ENCODE measurements at regions of chr13 and their contacts with region 1.

Region 1: GRCh38 chr13:44435142-44435982 is 61.7 kb downstream of the SERP2 start:
- DNase-seq: peak; percentile 86
- H3K4me3 Mint-ChIP-seq: peak overlapping the region; percentile 71
- H3K27ac Mint-ChIP-seq: peak overlapping the region; percentile 92
- H3K4me1 Mint-ChIP-seq: peaks cover 29% of the 10 kb centered on the region
- H3K27me3 Mint-ChIP-seq: no peaks in the 10 kb centered on the region
- CTCF ChIP-seq: no peak

Region 2: GRCh38 chr13:43905435-43906031 is 529.8 kb before region 1 on chr13:
- CTCF ChIA-PET with region 1: interaction called, 6 read pairs
- intact Hi-C with region 1: loop called (anchors 1 kb)
- DNase-seq: peak; percentile 23
- H3K4me3 Mint-ChIP-seq: no peak overlapping the region
- H3K27ac Mint-ChIP-seq: no peak overlapping the region
- H3K4me1 Mint-ChIP-seq: peaks cover 18% of the 10 kb centered on the region
- H3K27me3 Mint-ChIP-seq: no peaks in the 10 kb centered on the region
- CTCF ChIP-seq: peak; percentile 44

Region 3: DNA sequence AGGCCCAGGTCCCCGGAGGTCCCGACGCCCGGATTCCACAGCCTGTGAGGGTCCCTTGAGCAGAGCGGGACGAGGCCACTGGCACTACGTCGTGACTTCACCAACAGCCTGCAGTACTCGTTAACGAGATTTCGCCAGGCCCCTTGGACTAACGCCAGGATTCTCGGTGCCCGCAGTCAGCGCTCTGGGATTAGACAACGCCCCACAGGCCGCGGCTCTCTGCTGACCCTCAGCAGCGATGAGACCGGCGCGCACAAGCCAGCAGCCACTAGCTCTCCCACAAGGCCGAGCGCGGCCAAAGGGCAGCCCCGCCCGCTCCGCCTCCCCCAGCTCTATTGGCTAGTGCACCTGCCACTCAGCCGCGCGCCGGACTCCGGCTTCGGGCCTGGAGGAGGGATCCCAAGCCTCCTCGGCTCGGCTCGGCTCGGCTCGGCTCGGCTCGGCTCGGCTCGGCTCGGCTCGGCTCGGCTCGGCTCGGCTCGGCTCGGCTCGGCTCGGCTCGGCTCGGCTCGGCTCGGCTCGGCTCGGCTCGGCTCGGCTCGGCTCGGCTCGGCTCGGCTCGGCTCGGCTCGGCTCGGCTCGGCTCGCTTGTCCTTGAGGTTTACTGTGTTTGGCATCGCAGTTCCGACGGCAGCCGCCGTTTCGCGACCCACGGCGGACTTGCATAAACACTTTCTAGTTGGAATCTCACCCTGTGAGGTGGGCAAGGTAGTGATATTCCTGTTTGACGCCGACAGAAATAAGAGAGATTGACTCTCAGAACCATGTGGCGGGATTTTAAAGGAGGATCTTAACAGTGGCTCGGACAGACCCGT is 293.4 kb before region 1 on chr13:
- CTCF ChIA-PET with region 1: interaction called, 5 read pairs
- intact Hi-C with region 1: loop called (anchors 5 kb)
- DNase-seq: peak; percentile 97
- H3K4me3 Mint-ChIP-seq: peak overlapping the region; percentile 75
- H3K27ac Mint-ChIP-seq: peak overlapping the region; percentile 85
- H3K4me1 Mint-ChIP-seq: peaks cover 20% of the 10 kb centered on the region
- H3K27me3 Mint-ChIP-seq: no peaks in the 10 kb centered on the region
- CTCF ChIP-seq: no peak

Region 4: DNA sequence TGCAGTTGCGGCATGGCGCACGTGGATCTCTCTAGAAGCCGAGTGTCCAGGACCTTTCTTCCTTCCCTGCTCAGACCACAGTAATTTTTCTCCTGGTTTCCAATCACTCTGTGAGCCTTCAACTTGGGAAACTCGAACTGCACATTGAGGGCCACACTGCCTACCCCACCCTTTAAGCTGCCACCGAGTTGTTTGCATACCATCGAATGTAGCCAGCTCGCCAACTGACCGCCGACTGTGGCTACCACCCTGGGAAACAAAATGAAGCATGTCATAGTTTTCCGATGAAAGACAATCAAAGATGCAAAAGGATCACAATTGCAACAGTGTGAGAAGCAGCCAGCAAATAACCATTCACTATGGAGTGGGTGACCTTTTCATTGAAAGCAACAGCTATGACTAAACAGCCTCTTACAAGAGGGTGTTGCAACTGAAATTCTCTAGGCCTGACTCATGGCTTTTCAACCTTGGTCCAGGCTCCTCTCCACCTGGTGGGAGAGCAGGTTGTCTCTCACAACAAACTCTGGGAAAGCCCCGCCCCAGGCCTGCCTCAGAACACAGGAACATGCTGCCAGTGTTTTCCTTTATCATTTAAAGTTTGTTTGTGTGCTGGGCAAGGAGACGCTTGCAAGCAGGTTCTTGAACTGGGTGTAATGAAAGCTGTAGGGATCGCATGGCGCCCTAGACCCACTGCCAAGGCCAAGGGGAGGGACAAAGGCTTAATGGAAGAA is 203.4 kb before region 1 on chr13:
- CTCF ChIA-PET with region 1: interaction called, 8 read pairs
- intact Hi-C with region 1: loop called (anchors 5 kb)
- DNase-seq: peak; percentile 86
- H3K4me3 Mint-ChIP-seq: peak overlapping the region; percentile 52
- H3K27ac Mint-ChIP-seq: no peak overlapping the region
- H3K4me1 Mint-ChIP-seq: peaks cover 7% of the 10 kb centered on the region
- H3K27me3 Mint-ChIP-seq: no peaks in the 10 kb centered on the region
- CTCF ChIP-seq: no peak

Region 5: DNA sequence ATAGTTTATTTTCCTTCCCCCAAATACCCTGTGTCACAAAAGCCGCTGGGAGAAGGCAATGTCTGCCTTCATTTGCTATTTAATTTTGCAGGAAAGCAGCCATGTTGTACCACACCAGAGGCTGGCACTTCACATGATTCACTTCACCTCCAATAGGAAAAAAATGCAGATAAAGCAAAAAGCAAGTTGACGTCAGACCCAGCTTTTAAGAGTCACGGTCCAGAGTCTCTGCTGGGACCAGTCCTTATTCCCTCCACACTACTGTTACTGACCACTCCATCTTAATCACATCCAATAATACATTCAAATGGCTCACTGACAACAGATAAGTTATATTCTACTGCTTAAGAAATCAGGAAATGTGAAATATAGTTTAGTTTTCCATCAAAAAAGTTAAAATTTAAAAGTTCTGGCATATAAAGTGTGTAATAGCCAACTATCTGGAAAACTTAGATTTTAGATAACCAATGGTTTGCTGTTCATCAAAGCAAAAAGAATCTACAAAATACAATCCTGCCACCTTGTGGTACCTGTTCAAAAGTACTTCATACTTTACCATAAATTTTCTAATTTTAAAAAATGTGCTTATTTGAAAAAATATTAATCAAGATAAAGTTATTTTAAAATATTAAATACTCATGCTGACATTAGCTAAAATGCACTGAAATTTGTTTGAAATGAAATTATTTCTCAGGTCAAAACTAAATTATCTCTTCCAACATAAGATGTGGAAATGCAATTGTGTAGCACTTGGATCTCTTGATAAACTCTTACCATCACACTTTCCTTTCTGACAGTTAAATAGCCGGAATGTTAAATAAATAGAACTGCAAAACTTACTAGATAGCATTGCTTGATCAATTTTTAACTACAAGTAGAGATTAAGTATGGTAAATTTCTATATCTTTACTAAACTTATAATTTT is 35.5 kb after region 1 on chr13:
- CTCF ChIA-PET with region 1: no interaction called
- intact Hi-C with region 1: loop called (anchors 5 kb)
- DNase-seq: no peak
- H3K4me3 Mint-ChIP-seq: no peak overlapping the region
- H3K27ac Mint-ChIP-seq: no peak overlapping the region
- H3K4me1 Mint-ChIP-seq: peaks cover 10% of the 10 kb centered on the region
- H3K27me3 Mint-ChIP-seq: no peaks in the 10 kb centered on the region
- CTCF ChIP-seq: no peak

Region 6: DNA sequence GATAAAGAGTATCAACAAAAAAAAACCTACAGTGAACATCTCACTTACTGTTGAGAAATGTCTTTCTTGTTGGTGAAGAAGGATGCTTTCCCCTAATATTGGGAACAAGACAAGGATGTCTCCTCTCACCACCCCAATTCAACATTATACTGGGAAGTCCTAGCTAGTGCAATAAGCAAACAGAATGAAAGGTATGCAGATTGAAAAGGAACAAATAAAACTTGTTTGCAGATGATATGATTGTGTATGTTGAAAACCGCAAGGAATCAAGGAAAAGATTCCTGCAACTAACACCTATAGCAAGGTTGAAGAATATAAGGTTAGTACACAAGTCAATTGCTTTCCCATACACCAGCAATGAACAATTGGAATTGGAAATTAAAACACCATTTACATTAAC is 94.1 kb after region 1 on chr13:
- CTCF ChIA-PET with region 1: no interaction called
- intact Hi-C with region 1: no loop called
- DNase-seq: no peak
- H3K4me3 Mint-ChIP-seq: no peak overlapping the region
- H3K27ac Mint-ChIP-seq: no peak overlapping the region
- H3K4me1 Mint-ChIP-seq: no peaks in the 10 kb centered on the region
- H3K27me3 Mint-ChIP-seq: no peaks in the 10 kb centered on the region
- CTCF ChIP-seq: no peak